Mucosa of descending colon (tissue), 3 donors: ENCODE measurements at regions of chr9 and their contacts with region 1.

Region 1: DNA sequence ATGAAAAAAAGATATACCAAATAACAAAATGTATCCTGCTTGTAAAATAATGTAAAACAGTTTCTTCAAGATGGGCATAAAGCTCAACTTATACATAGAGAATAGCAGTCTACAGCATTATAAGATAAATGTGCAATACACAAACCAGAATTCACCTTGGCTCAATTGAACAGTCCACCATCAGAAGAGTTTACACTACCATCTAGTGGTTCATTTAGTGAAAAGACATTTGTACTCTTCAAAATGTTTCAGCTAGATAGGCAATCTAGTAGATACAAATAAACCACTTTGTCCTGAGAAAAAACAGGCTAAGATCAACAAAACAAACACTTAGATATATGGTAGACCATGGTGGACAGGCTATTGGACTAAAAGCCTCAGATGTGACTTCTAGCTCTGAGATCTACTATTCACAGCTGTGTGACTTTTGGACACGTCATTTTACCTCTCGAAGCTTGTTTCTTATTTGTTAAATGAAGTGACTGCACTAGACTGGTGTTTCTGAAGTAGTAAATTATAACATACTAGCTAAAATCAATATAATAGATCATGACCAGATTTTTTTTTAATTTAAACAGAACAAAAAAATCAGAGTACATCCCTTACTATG is 22.1 kb upstream of the TPD52L3 start:
- DNase-seq: no peak
- ATAC-seq: peak; percentile 67
- H3K4me3 ChIP-seq: no peak overlapping the region
- H3K4me1 ChIP-seq: no peaks in the 10 kb centered on the region
- CTCF ChIP-seq: no peak

Region 2: GRCh38 chr9:6055213-6055612 is 250.8 kb before region 1 on chr9:
- intact Hi-C with region 1: loop called in 1 of 2 experiments (anchors 10 kb)
- DNase-seq: peak in 1 of 3 donors; percentile 83
- ATAC-seq: peak; percentile 86
- H3K4me3 ChIP-seq: no peak overlapping the region
- H3K4me1 ChIP-seq: no peaks in the 10 kb centered on the region
- CTCF ChIP-seq: no peak

Region 3: DNA sequence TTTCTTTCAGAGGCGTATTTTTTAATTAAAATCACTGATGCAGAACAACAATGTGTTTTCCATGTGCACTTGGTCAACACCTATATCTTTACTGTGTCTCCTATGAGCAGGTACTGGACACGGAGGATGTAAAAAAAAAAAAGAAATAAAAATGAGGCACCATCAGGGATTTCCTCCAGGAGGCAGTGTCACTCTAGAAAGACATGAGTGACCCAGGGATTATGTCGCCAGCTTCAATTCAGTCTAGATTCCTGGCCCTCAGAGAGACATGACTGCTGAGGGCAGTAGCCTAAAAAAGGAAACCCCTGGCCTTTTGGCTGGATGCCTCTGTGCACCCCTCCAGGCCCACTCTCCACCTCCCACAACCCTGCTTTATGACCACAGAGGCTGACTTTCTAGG is 108.7 kb before region 1 on chr9:
- intact Hi-C with region 1: loop called in 1 of 2 experiments (anchors 5 kb)
- DNase-seq: peak in 1 of 3 donors; percentile 47
- ATAC-seq: peak; percentile 74
- H3K4me3 ChIP-seq: no peak overlapping the region
- H3K4me1 ChIP-seq: peaks cover 6% of the 10 kb centered on the region
- CTCF ChIP-seq: no peak

Region 4: GRCh38 chr9:6611865-6612264 is 305.8 kb after region 1 on chr9:
- intact Hi-C with region 1: no loop called
- DNase-seq: no peak
- ATAC-seq: no peak
- H3K4me3 ChIP-seq: no peak overlapping the region
- H3K4me1 ChIP-seq: no peaks in the 10 kb centered on the region
- CTCF ChIP-seq: no peak